B cell (primary cell): ENCODE measurements at regions of chr5 and their contacts with region 1.

Region 1: DNA sequence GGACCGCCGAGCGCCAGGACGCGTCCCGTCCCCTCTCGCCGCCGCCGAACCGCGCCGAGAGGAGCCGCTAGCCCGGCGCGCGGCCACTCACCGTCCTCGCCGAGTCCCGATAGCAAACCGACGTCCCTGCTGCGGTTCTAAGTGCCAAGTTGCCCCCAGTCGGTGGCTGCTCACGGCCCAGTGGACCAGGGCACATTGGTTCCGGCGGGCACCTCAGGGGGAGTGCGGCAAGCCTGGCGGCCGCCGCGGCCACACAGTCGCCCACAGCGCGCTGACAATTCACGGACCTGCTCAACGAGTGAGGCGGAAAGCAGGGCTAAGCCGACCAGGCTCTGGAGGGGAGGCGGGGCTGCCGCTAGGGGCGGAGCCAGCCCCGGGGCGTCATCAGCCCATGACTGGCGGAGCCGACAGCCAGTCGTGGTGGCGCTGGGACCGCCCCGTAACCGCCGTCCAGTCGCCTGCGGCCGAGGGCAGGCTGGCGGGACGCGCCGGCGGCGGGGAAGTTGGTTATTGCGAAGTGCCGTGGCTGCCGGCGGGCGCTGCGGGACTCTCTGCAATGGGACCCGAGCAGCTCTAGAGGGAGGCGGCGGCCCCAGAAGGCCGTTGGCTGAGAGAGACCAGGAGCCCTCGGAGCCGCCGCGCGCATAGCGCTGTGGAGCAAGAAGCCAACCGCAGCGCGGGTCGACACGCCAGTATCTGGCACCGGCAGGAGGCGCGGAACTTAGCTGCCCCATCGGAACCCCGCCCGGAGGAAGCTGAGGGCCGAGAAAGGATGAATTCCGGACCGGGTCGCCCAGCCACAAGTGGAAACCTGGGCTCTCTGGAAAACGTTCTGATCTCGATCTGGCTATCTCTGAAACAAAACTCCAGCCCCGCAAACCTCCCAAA is at the start of gene MARCHF3:
- DNase-seq: peak; percentile 97
- ATAC-seq: peak; percentile 91
- H3K4me3 ChIP-seq: peak within 1 kb of the TSS; percentile 82 to 96 (median 88)
- H3K4me3 Mint-ChIP-seq: peak within 1 kb of the TSS; percentile 97
- H3K27ac ChIP-seq: peak within 1 kb of the TSS; percentile 65 to 89
- H3K27ac Mint-ChIP-seq: peak within 1 kb of the TSS; percentile 96
- H3K4me1 ChIP-seq: peaks cover 25 to 35% of the 10 kb centered on the region in 2 donors
- H3K4me1 Mint-ChIP-seq: peaks cover 45% of the 10 kb centered on the region
- H3K27me3 ChIP-seq: no peaks in the 10 kb centered on the region
- H3K27me3 Mint-ChIP-seq: no peaks in the 10 kb centered on the region
- CTCF ChIP-seq: peak; percentile 36
- total RNA-seq, gene MARCHF3: 35.0 and 42.2 TPM in 2 replicates

Region 2: DNA sequence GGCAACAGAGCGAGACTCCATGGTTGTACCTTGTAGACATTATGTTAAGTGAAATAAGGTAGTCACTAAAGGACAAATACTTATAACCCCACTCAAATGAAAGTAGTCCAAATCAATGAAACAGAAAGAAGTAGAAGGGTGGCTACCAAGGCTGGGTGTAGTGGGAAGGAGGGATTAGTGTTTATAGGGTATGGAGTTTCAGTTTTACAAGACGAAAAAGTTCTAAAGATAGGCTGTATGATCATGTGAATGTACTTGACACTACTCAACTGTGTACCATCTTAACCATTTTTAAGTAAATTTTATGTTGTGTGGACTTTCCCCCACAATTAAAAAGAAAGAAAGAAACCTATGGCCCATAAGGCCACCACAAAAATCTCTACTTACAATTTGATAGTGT is 467.7 kb before region 1 on chr5:
- CTCF ChIA-PET with region 1: no interaction called
- POLR2A ChIA-PET with region 1: no interaction called
- intact Hi-C with region 1: no loop called
- DNase-seq: no peak
- ATAC-seq: no peak
- H3K4me3 ChIP-seq: no peak overlapping the region
- H3K4me3 Mint-ChIP-seq: no peak overlapping the region
- H3K27ac ChIP-seq: no peak overlapping the region
- H3K27ac Mint-ChIP-seq: no peak overlapping the region
- H3K4me1 ChIP-seq: no peaks in the 10 kb centered on the region
- H3K4me1 Mint-ChIP-seq: no peaks in the 10 kb centered on the region
- H3K27me3 ChIP-seq: no peaks in the 10 kb centered on the region
- H3K27me3 Mint-ChIP-seq: no peaks in the 10 kb centered on the region
- CTCF ChIP-seq: no peak

Region 3: DNA sequence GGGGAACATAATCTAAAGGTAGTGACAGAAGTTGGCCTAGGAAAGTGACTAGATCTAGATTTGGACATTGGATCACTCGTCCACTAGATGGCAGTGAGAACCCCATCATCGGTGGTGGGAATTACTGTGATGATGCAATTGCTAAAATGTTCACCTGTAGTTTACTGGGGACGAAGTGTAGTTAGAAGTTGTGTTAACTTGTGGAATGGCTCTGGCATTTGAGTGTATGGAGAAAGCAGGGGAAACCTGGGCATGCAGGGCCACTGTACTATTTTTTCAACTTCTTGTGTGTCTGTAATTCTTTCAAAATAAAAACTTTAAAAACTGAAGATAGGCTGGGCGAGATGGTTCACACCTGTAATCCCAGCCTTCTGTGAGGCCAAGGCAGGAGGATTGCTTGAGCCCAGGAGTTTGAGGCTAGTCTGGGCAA is 354.3 kb before region 1 on chr5:
- CTCF ChIA-PET with region 1: no interaction called
- POLR2A ChIA-PET with region 1: no interaction called
- intact Hi-C with region 1: loop called (anchors 1 kb)
- DNase-seq: peak; percentile 79
- ATAC-seq: peak; percentile 75
- H3K4me3 ChIP-seq: no peak overlapping the region
- H3K4me3 Mint-ChIP-seq: no peak overlapping the region
- H3K27ac ChIP-seq: no peak overlapping the region
- H3K27ac Mint-ChIP-seq: no peak overlapping the region
- H3K4me1 ChIP-seq: peaks cover 0 to 4% of the 10 kb centered on the region in 2 donors
- H3K4me1 Mint-ChIP-seq: peaks cover 3% of the 10 kb centered on the region
- H3K27me3 ChIP-seq: no peaks in the 10 kb centered on the region
- H3K27me3 Mint-ChIP-seq: no peaks in the 10 kb centered on the region
- CTCF ChIP-seq: peak; percentile 87

Region 4: GRCh38 chr5:126869005-126869451 is 161.5 kb before region 1 on chr5:
- CTCF ChIA-PET with region 1: interaction called, 4 read pairs
- POLR2A ChIA-PET with region 1: no interaction called
- intact Hi-C with region 1: loop called (anchors 2 kb)
- DNase-seq: peak; percentile 35
- ATAC-seq: peak; percentile 61
- H3K4me3 ChIP-seq: peak overlapping the region; percentile 11 to 61 (median 34)
- H3K4me3 Mint-ChIP-seq: peak overlapping the region; percentile 83
- H3K27ac ChIP-seq: no peak overlapping the region
- H3K27ac Mint-ChIP-seq: peak overlapping the region; percentile 43
- H3K4me1 ChIP-seq: peaks cover 15 to 16% of the 10 kb centered on the region in 2 donors
- H3K4me1 Mint-ChIP-seq: peaks cover 16% of the 10 kb centered on the region
- H3K27me3 ChIP-seq: no peaks in the 10 kb centered on the region
- H3K27me3 Mint-ChIP-seq: no peaks in the 10 kb centered on the region
- CTCF ChIP-seq: no peak

Region 5: GRCh38 chr5:126972062-126972895 is 58.2 kb before region 1 on chr5:
- CTCF ChIA-PET with region 1: interaction called, 4 read pairs
- POLR2A ChIA-PET with region 1: interaction called, 4 read pairs
- intact Hi-C with region 1: loop called (anchors 1 kb)
- DNase-seq: peak; percentile 85
- ATAC-seq: peak; percentile 78
- H3K4me3 ChIP-seq: peak overlapping the region in 3 of 5 experiments; percentile 3 to 53 (median 39)
- H3K4me3 Mint-ChIP-seq: peak overlapping the region; percentile 91
- H3K27ac ChIP-seq: peak overlapping the region; percentile 70 to 97
- H3K27ac Mint-ChIP-seq: peak overlapping the region; percentile 99
- H3K4me1 ChIP-seq: peaks cover 72 to 73% of the 10 kb centered on the region in 2 donors
- H3K4me1 Mint-ChIP-seq: peaks cover 74% of the 10 kb centered on the region
- H3K27me3 ChIP-seq: no peaks in the 10 kb centered on the region
- H3K27me3 Mint-ChIP-seq: no peaks in the 10 kb centered on the region
- CTCF ChIP-seq: no peak

Region 6: DNA sequence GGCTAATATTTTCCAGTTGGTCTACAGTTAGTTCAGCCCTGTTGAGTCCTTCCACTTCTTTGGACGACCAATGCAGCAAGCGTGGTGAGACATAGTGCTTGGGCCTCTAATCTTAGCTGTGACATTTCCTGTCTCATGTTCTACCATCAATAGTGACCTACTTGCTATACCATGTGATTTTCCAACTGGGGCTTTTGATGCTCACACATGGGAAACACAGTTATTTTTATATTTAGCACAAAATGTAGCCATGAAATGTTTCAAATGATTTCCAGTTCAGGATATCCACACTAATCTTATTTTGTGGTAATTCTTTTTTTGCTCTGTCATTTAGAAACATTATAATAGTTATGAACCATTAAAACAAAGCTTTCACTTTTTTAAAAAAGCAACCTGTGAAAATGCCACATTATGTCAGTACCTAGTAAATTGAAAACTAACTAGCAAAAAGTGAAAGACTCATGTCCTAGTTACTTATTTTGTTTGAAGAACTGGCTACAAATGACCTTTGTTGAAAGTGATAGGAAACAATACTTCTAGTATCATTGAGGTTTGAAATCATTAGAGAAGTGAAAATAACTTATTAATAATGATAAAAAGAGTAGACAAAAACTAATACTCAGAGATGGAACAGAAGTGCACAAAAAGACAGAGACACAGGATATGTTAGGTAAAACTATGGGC is 18.4 kb before region 1 on chr5:
- CTCF ChIA-PET with region 1: interaction called, 9 read pairs
- POLR2A ChIA-PET with region 1: interaction called, 3 read pairs
- intact Hi-C with region 1: loop called (anchors 1 kb)
- DNase-seq: no peak
- ATAC-seq: peak; percentile 47
- H3K4me3 ChIP-seq: peak overlapping the region in 1 of 5 experiments; percentile 25
- H3K4me3 Mint-ChIP-seq: peak overlapping the region; percentile 12
- H3K27ac ChIP-seq: peak overlapping the region in 1 of 2 donors; percentile 65
- H3K27ac Mint-ChIP-seq: peak overlapping the region; percentile 75
- H3K4me1 ChIP-seq: peaks cover 31 to 53% of the 10 kb centered on the region in 2 donors
- H3K4me1 Mint-ChIP-seq: peaks cover 68% of the 10 kb centered on the region
- H3K27me3 ChIP-seq: no peaks in the 10 kb centered on the region
- H3K27me3 Mint-ChIP-seq: no peaks in the 10 kb centered on the region
- CTCF ChIP-seq: no peak

Region 7: GRCh38 chr5:127229185-127229889 is 198.8 kb after region 1 on chr5:
- CTCF ChIA-PET with region 1: no interaction called
- POLR2A ChIA-PET with region 1: interaction called, 9 read pairs
- intact Hi-C with region 1: loop called (anchors 1 kb)
- DNase-seq: peak; percentile 76
- ATAC-seq: peak; percentile 84
- H3K4me3 ChIP-seq: peak overlapping the region; percentile 56 to 79 (median 68)
- H3K4me3 Mint-ChIP-seq: peak overlapping the region; percentile 87
- H3K27ac ChIP-seq: peak overlapping the region; percentile 67
- H3K27ac Mint-ChIP-seq: peak overlapping the region; percentile 89
- H3K4me1 ChIP-seq: peaks cover 8 to 15% of the 10 kb centered on the region in 2 donors
- H3K4me1 Mint-ChIP-seq: peaks cover 19% of the 10 kb centered on the region
- H3K27me3 ChIP-seq: no peaks in the 10 kb centered on the region
- H3K27me3 Mint-ChIP-seq: no peaks in the 10 kb centered on the region
- CTCF ChIP-seq: no peak